Mammary epithelial cell (primary cell): ENCODE measurements at regions of chr16 and their contacts with region 1.

Region 1: GRCh38 chr16:8885674-8886592 is 3.8 kb downstream of the LITAFD start:
- DNase-seq: peak; percentile 51
- H3K4me3 ChIP-seq: no peak overlapping the region
- H3K27ac ChIP-seq: no peak overlapping the region
- H3K4me1 ChIP-seq: peaks cover 9% of the 10 kb centered on the region
- H3K27me3 ChIP-seq: no peaks in the 10 kb centered on the region
- CTCF ChIP-seq: no peak

Region 2: DNA sequence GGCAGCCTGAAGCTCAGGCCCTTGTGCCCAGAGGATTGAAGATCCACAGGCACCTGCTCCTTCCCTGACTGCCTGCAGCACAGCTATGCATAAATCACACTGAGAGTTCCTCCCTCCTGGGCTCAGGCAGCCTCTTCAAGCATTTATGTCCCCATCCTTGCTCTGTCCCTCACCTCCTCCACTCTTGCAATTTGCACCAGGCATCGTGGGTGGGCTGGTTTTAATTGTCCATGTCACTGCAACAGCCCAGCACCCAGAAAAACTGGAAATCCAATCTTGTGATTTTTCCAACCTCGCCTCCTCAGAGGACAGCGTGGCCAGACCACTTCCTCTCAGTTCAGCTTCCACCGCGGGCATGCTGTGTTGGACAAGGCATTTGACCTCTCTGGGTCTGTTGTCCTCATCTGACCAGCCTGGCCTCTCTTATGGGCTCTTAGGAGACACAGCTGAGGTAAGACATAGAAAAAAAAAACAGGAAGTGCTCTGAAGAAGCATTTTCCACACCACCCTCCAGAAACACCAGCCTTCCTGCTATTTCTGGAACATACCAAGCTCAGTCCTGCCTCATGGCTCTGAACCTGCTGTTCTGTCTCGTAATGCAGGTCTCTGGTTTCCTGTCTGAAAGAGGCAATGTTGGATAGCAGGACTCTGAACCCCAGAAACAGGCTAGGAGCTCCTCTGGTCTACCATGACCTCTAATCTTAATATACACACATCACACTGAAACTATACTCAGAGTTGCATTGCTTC is 303.9 kb before region 1 on chr16:
- CTCF ChIA-PET with region 1: no interaction called
- dilution Hi-C with region 1: no loop called
- in situ Hi-C with region 1: no loop called
- intact Hi-C with region 1: no loop called
- DNase-seq: no peak
- H3K4me3 ChIP-seq: no peak overlapping the region
- H3K27ac ChIP-seq: no peak overlapping the region
- H3K4me1 ChIP-seq: no peaks in the 10 kb centered on the region
- H3K27me3 ChIP-seq: no peaks in the 10 kb centered on the region
- CTCF ChIP-seq: no peak

Region 3: DNA sequence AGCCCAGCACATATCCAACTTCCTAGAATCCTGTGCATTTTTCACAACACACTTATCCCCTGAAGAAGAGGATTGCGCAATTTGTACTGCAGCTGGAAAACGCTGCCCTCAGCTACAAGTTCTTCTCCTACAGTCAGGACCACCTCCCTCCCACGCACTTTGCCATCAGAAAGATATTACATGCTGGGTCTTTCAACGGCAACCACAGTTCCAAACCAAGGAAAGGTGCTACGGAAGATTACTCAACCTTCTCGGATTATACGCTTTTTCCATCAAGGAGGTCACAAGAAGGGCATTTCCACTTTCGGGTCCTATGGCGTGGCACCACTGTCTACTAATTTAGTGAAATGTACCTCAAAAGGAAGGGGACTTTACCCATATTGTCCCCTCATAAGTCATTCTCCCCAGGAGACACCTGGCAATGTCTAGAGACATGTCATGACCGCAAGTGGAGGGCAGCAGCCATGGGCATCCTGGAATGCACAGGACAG is 42.6 kb after region 1 on chr16:
- CTCF ChIA-PET with region 1: no interaction called
- dilution Hi-C with region 1: loop called (anchors 5 kb)
- in situ Hi-C with region 1: no loop called
- intact Hi-C with region 1: no loop called
- DNase-seq: no peak
- H3K4me3 ChIP-seq: no peak overlapping the region
- H3K27ac ChIP-seq: no peak overlapping the region
- H3K4me1 ChIP-seq: no peaks in the 10 kb centered on the region
- H3K27me3 ChIP-seq: no peaks in the 10 kb centered on the region
- CTCF ChIP-seq: no peak